ENCODE measurements at regions of chr20 and their contacts with region 1.

Region 1: DNA sequence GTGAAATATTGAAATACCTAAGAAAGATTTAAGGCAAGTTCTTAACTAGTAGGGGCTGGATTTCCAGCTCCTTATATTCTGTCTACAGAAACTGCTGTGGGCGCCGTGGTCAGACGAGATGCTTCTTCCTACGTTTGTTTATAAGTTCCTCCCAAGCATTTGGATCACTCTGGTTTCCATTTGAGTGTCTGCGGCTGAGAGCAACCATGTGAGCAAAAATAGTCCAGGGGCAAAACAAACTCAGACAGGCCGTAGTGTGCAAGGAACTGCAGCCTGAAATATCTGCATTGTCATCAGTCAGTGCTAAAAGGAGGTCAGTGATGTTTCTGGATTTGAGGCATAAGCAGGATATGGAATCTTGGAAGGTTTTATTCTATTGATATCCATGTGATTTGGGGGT is 485.9 kb upstream of the JAG1 start:
- DNase-seq: peak in 2 of 5 donors; percentile 20 to 23
- ATAC-seq: peak; percentile 68 to 91 (median 74)
- H3K4me3 ChIP-seq: no peak overlapping the region
- H3K27ac ChIP-seq: peak overlapping the region in 11 of 12 donors; percentile 0 to 63 (median 53)
- H3K4me1 ChIP-seq: peaks cover 0 to 29% (median 16%) of the 10 kb centered on the region in 12 donors
- H3K27me3 ChIP-seq: no peaks in the 10 kb centered on the region
- CTCF ChIP-seq: no peak
- POLR2A ChIP-seq: no peak

Region 2: DNA sequence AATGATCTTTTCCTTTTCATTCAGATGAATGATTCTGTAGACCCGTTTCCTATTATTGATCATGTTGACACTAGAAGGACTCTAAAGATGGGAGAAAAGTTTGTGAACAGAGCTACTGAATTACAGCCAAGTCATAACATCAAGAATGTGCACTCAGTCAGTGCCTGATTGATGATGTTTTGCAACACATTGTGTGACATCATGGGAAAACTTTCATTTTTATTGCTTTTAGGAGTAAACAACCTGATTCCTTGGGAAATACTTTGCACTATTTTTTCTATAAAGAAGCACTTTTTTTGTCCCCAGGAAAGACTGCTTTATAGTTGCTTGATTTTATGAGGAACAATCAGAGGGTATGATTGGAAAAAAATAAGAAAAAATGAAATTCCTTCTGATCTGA is 102.1 kb before region 1 on chr20:
- intact Hi-C with region 1: loop called in 1 of 10 experiments (anchors 10 kb)
- DNase-seq: no peak
- ATAC-seq: no peak
- H3K4me3 ChIP-seq: no peak overlapping the region
- H3K27ac ChIP-seq: peak overlapping the region in 2 of 12 donors; percentile 2 to 40
- H3K4me1 ChIP-seq: no peaks in the 10 kb centered on the region
- H3K27me3 ChIP-seq: no peaks in the 10 kb centered on the region
- CTCF ChIP-seq: no peak
- POLR2A ChIP-seq: no peak